ENCODE measurements at regions of chr11 and their contacts with region 1.

Region 1: GRCh38 chr11:130131961-130132850 is 27.4 kb upstream of the ST14 start:
- DNase-seq: peak; percentile 67
- ATAC-seq: peak; percentile 89
- H3K4me3 Mint-ChIP-seq: no peak overlapping the region
- H3K27ac Mint-ChIP-seq: peak overlapping the region; percentile 47; the same call in 1 of the 2 replicates
- H3K4me1 Mint-ChIP-seq: no peaks in the 10 kb centered on the region
- H3K27me3 Mint-ChIP-seq: no peaks in the 10 kb centered on the region
- CTCF ChIP-seq: no peak

Region 2: DNA sequence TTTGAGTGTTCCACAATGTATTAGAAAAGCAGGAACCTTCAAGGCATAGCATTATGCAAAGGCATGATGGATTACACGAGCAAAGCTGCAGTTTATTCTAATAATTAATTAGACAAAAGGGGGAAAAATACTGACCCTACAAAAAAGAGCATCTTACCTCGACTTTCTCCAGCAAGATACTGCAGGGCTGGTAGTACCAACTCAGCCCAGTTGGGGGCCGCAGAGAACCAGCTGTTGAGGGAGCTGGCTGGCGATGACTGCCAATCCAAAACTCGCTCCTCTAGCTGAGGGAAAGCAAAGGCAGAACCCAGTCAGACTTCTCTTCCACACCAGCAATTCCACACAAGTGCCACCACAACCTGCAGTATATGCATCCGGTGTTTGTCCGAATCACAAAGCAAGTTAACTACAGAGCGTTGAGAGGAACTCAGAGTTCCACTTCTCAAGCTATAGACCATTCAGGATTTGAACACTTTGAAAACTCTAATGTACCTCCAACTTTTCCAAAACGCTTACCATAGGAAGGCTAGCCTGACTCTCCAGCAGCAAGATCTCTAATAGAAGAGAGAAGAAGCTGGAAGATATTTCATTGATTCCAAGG is 250.5 kb before region 1 on chr11:
- CTCF ChIA-PET with region 1: interaction called, 18 read pairs
- POLR2A ChIA-PET with region 1: no interaction called
- DNase-seq: peak; percentile 74
- ATAC-seq: peak; percentile 88
- H3K4me3 Mint-ChIP-seq: no peak overlapping the region
- H3K27ac Mint-ChIP-seq: no peak overlapping the region; the same call in 1 of the 2 replicates
- H3K4me1 Mint-ChIP-seq: no peaks in the 10 kb centered on the region
- H3K27me3 Mint-ChIP-seq: no peaks in the 10 kb centered on the region
- CTCF ChIP-seq: peak; percentile 68

Region 3: DNA sequence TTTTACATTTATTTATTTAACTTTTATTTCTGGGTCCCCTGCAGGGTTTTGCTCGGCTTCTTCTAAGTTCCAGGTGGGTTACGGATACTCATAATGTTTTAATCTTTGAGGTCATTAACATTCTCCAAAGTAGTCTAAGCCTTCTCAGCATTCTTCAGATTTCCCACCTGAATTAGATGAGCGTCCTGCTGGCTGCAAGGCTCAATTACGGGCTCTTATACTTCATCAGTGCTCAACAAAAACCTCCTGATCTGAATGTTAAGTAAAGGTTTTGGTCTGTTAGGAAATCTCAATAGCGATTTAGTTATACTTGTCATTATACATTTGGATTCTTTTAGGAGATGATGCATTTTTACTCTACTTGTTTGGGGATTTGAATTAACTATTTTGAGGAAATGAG is 209.5 kb before region 1 on chr11:
- CTCF ChIA-PET with region 1: interaction called, 50 read pairs
- POLR2A ChIA-PET with region 1: interaction called, 6 read pairs
- DNase-seq: no peak
- ATAC-seq: no peak
- H3K4me3 Mint-ChIP-seq: no peak overlapping the region
- H3K27ac Mint-ChIP-seq: no peak overlapping the region
- H3K4me1 Mint-ChIP-seq: peaks cover 15% of the 10 kb centered on the region
- H3K27me3 Mint-ChIP-seq: no peaks in the 10 kb centered on the region
- CTCF ChIP-seq: no peak

Region 4: GRCh38 chr11:129992161-129992944 is 139.9 kb before region 1 on chr11:
- CTCF ChIA-PET with region 1: interaction called, 36 read pairs
- POLR2A ChIA-PET with region 1: no interaction called
- DNase-seq: peak; percentile 66
- ATAC-seq: peak; percentile 89
- H3K4me3 Mint-ChIP-seq: no peak overlapping the region
- H3K27ac Mint-ChIP-seq: peak overlapping the region; percentile 63
- H3K4me1 Mint-ChIP-seq: peaks cover 19% of the 10 kb centered on the region
- H3K27me3 Mint-ChIP-seq: no peaks in the 10 kb centered on the region
- CTCF ChIP-seq: no peak

Region 5: DNA sequence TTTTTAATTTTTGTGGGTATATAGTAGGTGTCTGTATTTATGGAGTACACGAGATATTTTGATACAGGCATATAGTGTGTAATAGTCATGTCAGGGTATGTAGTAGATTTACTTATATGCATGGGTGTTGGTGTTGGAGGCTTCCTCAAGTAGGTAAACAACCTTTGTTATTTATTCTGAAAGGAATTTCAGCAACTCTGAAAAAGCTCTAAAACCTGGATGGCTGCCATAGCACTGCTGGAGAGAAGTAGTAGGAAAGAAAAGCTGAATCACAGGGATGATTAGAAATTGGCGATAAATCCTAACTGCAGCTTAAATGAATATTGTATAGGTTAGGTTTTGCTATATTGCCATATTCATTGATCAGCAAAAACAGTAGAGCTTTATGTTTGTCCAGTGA is 17.0 kb before region 1 on chr11:
- CTCF ChIA-PET with region 1: interaction called, 16 read pairs
- POLR2A ChIA-PET with region 1: no interaction called
- DNase-seq: no peak
- ATAC-seq: no peak; the same call in 1 of the 2 replicates
- H3K4me3 Mint-ChIP-seq: no peak overlapping the region
- H3K27ac Mint-ChIP-seq: 0 out of 2 replicates have a peak overlapping the region, but pooled peaks have one; percentile 19
- H3K4me1 Mint-ChIP-seq: peaks cover 14% of the 10 kb centered on the region
- H3K27me3 Mint-ChIP-seq: no peaks in the 10 kb centered on the region
- CTCF ChIP-seq: no peak

Region 6: DNA sequence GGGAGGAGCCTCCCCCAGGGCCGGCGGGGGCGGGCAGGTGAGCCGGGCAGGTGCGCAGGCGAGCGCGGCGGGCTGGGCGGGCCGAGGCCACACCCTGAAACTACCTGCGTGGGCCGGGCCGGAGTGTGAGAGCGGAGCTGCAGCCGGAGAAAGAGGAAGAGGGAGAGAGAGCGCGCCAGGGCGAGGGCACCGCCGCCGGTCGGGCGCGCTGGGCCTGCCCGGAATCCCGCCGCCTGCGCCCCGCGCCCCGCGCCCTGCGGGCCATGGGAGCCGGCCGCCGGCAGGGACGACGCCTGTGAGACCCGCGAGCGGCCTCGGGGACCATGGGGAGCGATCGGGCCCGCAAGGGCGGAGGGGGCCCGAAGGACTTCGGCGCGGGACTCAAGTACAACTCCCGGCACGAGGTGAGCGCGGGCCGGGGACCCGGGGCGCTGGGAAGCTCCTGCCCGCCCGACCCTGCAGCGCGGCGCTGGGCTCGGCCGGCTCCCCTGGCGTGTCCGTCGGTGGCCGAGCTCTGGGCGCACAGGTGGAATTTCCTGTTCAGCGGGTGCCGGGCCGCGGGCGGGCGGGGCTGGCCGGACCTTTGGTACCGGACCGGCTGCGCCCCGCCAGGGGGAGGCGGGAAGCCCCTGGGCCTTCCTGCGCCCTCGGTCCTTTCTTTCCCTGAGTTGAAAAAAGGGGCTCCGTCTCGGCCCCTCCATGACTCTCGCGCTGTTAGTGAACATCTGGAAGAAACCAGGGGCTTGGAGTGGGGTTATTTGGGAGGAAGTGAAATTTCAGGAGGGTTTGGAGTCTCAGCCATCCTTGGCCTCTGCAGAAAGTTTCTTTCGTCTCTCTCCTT is 27.7 kb after region 1 on chr11 and contains the start of gene ST14:
- CTCF ChIA-PET with region 1: interaction called, 13 read pairs
- POLR2A ChIA-PET with region 1: no interaction called
- DNase-seq: peak; percentile 61
- ATAC-seq: peak; percentile 62
- H3K4me3 Mint-ChIP-seq: peak within 1 kb of the TSS; percentile 79
- H3K27ac Mint-ChIP-seq: no peak within 1 kb of the TSS
- H3K4me1 Mint-ChIP-seq: peaks cover 46% of the 10 kb centered on the region
- H3K27me3 Mint-ChIP-seq: peaks cover 55% of the 10 kb centered on the region
- CTCF ChIP-seq: no peak
- total RNA-seq, gene ST14: 27.5 to 33.9 TPM (median 27.8 TPM) in 3 replicates

Region 7: DNA sequence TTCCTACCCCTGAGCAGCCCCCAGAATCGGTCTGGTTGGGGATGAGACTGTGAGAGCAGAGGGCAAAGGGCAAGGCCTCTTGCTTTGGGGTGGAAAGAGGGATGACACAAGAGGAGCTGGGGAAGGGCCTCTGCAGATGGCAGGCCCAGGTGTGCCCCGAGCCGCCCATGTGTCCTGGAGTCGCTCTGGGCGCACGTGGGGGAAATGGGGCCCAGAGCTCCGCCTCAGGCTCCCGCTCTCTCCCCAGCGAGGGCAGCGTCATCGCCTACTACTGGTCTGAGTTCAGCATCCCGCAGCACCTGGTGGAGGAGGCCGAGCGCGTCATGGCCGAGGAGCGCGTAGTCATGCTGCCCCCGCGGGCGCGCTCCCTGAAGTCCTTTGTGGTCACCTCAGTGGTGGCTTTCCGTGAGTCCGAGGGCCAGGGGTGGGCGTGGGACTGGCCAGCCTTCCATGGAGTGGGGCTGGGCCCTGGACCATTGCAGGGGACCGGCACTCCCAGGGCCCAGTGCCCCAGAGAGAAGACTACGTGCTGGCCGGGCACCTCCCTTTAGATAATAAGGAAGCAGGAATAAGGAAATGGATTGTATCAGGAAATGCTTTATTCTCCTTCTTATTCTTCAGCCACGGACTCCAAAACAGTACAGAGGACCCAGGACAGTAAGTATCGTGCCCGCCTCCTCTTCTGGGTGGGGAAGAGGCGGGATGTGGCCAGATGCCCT is 57.4 kb after region 1 on chr11:
- CTCF ChIA-PET with region 1: no interaction called
- POLR2A ChIA-PET with region 1: no interaction called
- DNase-seq: peak; percentile 39
- ATAC-seq: peak; percentile 87
- H3K4me3 Mint-ChIP-seq: no peak overlapping the region
- H3K27ac Mint-ChIP-seq: no peak overlapping the region
- H3K4me1 Mint-ChIP-seq: no peaks in the 10 kb centered on the region
- H3K27me3 Mint-ChIP-seq: no peaks in the 10 kb centered on the region
- CTCF ChIP-seq: no peak

Measured in WTC11 (cell line).